Psoas muscle (tissue), 8 donors: ENCODE measurements at regions of chr18 and their contacts with region 1.

Region 1: DNA sequence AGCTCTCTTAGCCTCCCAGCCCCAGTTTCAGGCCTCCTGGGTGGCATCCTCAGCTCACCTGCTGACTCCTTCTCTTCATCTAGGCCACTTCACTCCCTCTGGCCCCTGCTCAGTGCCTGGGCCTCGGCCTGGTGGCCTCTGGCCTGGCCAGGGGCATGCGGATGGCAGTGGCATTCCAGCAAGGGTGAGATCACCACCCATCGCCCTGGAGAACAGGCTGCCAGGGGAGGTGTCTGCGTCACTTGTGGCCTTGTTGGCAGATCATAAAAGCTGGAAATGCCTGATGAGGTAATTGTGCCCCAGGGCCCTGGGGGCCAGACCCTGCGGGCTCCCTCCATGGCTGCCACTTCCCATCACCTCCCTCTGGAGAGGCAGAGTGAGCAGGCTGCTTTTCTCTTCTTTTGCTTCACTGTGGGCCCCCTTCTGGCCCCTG is 72.5 kb upstream of the SMAD2 start:
- DNase-seq: peak; percentile 65 to 67
- ATAC-seq: peak; percentile 91 to 97 (median 94)
- H3K4me3 ChIP-seq: no peak overlapping the region
- H3K27ac ChIP-seq: peak overlapping the region; percentile 71
- H3K4me1 ChIP-seq: peaks cover 8% of the 10 kb centered on the region
- H3K27me3 ChIP-seq: no peaks in the 10 kb centered on the region
- CTCF ChIP-seq: no peak

Region 2: GRCh38 chr18:47936975-47937374 is 66.0 kb before region 1 on chr18:
- intact Hi-C with region 1: loop called in 1 of 2 experiments (anchors 5 kb)
- DNase-seq: no peak
- ATAC-seq: no peak
- H3K4me3 ChIP-seq: no peak overlapping the region
- H3K27ac ChIP-seq: no peak overlapping the region
- H3K4me1 ChIP-seq: no peaks in the 10 kb centered on the region
- H3K27me3 ChIP-seq: no peaks in the 10 kb centered on the region
- CTCF ChIP-seq: no peak

Region 3: GRCh38 chr18:48300463-48300961 is 297.6 kb after region 1 on chr18:
- intact Hi-C with region 1: no loop called
- DNase-seq: no peak
- ATAC-seq: no peak
- H3K4me3 ChIP-seq: no peak overlapping the region
- H3K27ac ChIP-seq: no peak overlapping the region
- H3K4me1 ChIP-seq: peaks cover 6% of the 10 kb centered on the region
- H3K27me3 ChIP-seq: no peaks in the 10 kb centered on the region
- CTCF ChIP-seq: no peak